WTC11 (cell line): ENCODE measurements at regions of chr15 and their contacts with region 1.

Region 1: GRCh38 chr15:77821188-77821958 is 188.7 kb upstream of the LINGO1 start:
- DNase-seq: peak; percentile 82
- ATAC-seq: peak; percentile 72
- H3K4me3 Mint-ChIP-seq: peak overlapping the region; percentile 52; the same call in 1 of the 2 replicates
- H3K27ac Mint-ChIP-seq: no peak overlapping the region
- H3K4me1 Mint-ChIP-seq: peaks cover 29% of the 10 kb centered on the region
- H3K27me3 Mint-ChIP-seq: peaks cover 46% of the 10 kb centered on the region
- CTCF ChIP-seq: peak; percentile 42; the same call in 1 of the 2 replicates

Region 2: DNA sequence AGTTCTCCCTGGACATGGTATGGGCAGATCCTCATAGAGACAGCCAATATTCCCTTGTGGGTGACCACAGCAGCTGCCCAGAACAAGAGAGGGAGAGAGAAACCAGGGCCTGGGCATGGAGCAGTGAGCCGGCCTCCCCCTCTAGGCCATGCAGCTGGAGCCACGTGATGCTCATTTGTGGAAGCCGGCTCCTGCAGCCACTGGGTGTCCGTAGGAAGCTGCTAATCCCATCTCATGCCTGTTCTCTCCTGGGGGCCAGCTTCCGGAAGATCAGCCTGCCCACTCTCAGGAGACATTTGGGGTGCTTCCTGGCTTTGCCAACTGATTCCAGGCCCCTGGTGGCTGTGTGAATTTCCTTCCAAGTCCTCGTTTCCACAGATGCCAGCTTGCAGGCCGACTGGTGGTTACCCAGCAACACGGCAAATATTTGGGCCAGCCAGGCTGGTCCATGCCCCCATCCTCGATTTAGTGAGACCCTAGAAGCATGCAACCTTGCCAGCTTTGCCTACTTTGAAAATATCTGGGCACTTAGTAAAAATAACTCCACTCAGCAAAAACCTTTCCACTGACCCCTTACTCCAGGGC is 243.9 kb before region 1 on chr15:
- CTCF ChIA-PET with region 1: no interaction called
- POLR2A ChIA-PET with region 1: no interaction called
- DNase-seq: no peak
- ATAC-seq: peak; percentile 43
- H3K4me3 Mint-ChIP-seq: no peak overlapping the region
- H3K27ac Mint-ChIP-seq: no peak overlapping the region
- H3K4me1 Mint-ChIP-seq: 0 out of 2 replicates have a peak, but pooled peaks cover 2% of the 10 kb centered on the region
- H3K27me3 Mint-ChIP-seq: no peaks in the 10 kb centered on the region
- CTCF ChIP-seq: no peak

Region 3: DNA sequence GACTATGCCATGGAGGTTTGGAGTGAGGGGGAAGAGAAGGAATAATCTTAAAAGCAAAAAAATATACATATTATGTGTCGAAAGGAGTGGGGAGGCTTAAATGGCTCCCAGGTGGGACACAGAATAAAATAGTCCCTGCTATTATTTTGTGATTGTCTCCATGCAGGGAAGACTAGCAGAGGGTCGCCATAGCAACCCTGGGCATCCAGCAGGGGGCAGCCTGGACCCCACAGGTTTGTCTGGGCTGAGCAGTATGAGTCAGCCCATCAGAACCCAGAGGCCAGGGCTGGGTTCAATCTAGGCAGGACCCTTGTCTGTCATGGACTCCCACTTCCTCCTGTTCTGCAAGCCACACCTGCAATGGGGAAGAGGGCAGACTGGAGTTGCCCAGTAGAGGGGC is 171.1 kb before region 1 on chr15:
- CTCF ChIA-PET with region 1: interaction called, 131 read pairs
- POLR2A ChIA-PET with region 1: no interaction called
- DNase-seq: peak; percentile 86
- ATAC-seq: peak; percentile 85
- H3K4me3 Mint-ChIP-seq: no peak overlapping the region
- H3K27ac Mint-ChIP-seq: no peak overlapping the region
- H3K4me1 Mint-ChIP-seq: peaks cover 13% of the 10 kb centered on the region
- H3K27me3 Mint-ChIP-seq: peaks cover 4% of the 10 kb centered on the region; the same call in 1 of the 2 replicates
- CTCF ChIP-seq: peak; percentile 60

Region 4: GRCh38 chr15:77720655-77721054 is 100.7 kb before region 1 on chr15:
- CTCF ChIA-PET with region 1: interaction called, 17 read pairs
- POLR2A ChIA-PET with region 1: no interaction called
- DNase-seq: no peak
- ATAC-seq: no peak
- H3K4me3 Mint-ChIP-seq: no peak overlapping the region
- H3K27ac Mint-ChIP-seq: no peak overlapping the region
- H3K4me1 Mint-ChIP-seq: peaks cover 10% of the 10 kb centered on the region
- H3K27me3 Mint-ChIP-seq: no peaks in the 10 kb centered on the region
- CTCF ChIP-seq: no peak

Region 5: DNA sequence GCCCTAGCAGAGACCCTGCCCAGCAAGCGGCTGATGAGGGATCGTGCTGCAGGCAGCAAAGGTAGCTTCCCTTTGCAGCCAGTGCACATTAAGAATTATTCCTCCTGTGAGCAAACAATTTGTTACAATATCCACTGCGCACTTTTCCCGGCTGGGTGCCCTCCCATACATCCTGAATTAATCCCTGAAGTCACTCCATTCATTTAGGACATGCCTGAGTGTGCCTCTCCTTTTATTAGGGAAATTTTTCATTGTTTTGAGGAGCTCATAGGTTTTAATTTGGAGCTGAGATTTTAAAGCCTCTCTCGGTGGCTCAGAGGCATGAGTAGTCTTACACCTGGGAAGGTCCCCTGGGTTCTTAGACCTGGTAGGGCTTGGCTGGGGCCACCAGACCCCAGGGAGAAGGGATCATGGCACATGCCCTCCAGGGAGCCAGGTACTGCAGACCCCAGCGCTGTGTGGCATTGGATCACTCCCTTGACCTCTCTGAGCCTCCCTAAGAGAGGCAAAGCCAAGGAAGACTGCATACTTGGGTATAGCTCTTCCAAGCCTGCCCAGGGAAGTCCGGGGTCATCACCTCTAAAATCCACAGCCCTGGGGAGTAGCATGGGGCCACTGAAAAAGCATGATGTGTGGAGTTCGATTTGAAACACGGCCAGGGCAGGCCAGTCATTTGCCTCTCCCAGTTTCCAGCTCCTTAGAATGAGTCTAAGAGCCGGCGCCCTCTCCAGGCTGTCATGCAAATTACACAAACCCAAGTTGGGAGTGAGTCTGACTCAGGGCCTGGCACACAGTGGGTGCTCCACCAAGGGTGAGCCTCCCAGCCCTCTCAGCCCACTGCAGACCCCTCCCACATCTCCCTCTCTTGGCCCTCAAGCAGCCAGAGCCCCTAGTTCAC is 36.7 kb before region 1 on chr15:
- CTCF ChIA-PET with region 1: interaction called, 35 read pairs
- POLR2A ChIA-PET with region 1: no interaction called
- DNase-seq: peak; percentile 79
- ATAC-seq: peak; percentile 79
- H3K4me3 Mint-ChIP-seq: no peak overlapping the region
- H3K27ac Mint-ChIP-seq: no peak overlapping the region
- H3K4me1 Mint-ChIP-seq: peaks cover 20% of the 10 kb centered on the region
- H3K27me3 Mint-ChIP-seq: no peaks in the 10 kb centered on the region
- CTCF ChIP-seq: peak; percentile 58

Region 6: GRCh38 chr15:77836121-77836692 is 14.8 kb after region 1 on chr15:
- CTCF ChIA-PET with region 1: interaction called, 30 read pairs
- POLR2A ChIA-PET with region 1: no interaction called
- DNase-seq: no peak
- ATAC-seq: peak; percentile 84
- H3K4me3 Mint-ChIP-seq: no peak overlapping the region
- H3K27ac Mint-ChIP-seq: no peak overlapping the region
- H3K4me1 Mint-ChIP-seq: peaks cover 16% of the 10 kb centered on the region
- H3K27me3 Mint-ChIP-seq: no peaks in the 10 kb centered on the region; the same call in 1 of the 2 replicates
- CTCF ChIP-seq: no peak

Region 7: GRCh38 chr15:77959432-77959879 is 138.1 kb after region 1 on chr15:
- CTCF ChIA-PET with region 1: no interaction called
- POLR2A ChIA-PET with region 1: no interaction called
- DNase-seq: peak; percentile 95
- ATAC-seq: peak; percentile 99
- H3K4me3 Mint-ChIP-seq: no peak overlapping the region
- H3K27ac Mint-ChIP-seq: no peak overlapping the region
- H3K4me1 Mint-ChIP-seq: peaks cover 14% of the 10 kb centered on the region
- H3K27me3 Mint-ChIP-seq: peaks cover 35% of the 10 kb centered on the region
- CTCF ChIP-seq: peak; percentile 90

Region 8: GRCh38 chr15:78299101-78299930 is 477.9 kb after region 1 on chr15 and contains the start of gene SKIC8:
- CTCF ChIA-PET with region 1: no interaction called
- POLR2A ChIA-PET with region 1: no interaction called
- DNase-seq: peak; percentile 91
- ATAC-seq: peak; percentile 94
- H3K4me3 Mint-ChIP-seq: peak within 1 kb of the TSS; percentile 95
- H3K27ac Mint-ChIP-seq: peak within 1 kb of the TSS; percentile 91
- H3K4me1 Mint-ChIP-seq: peaks cover 4% of the 10 kb centered on the region
- H3K27me3 Mint-ChIP-seq: peaks cover 12% of the 10 kb centered on the region
- CTCF ChIP-seq: no peak
- total RNA-seq, gene SKIC8: 49.5 to 55.6 TPM (median 50.9 TPM) in 3 replicates